K562 (cell line): ENCODE measurements at regions of chr9 and their contacts with region 1.

Region 1: DNA sequence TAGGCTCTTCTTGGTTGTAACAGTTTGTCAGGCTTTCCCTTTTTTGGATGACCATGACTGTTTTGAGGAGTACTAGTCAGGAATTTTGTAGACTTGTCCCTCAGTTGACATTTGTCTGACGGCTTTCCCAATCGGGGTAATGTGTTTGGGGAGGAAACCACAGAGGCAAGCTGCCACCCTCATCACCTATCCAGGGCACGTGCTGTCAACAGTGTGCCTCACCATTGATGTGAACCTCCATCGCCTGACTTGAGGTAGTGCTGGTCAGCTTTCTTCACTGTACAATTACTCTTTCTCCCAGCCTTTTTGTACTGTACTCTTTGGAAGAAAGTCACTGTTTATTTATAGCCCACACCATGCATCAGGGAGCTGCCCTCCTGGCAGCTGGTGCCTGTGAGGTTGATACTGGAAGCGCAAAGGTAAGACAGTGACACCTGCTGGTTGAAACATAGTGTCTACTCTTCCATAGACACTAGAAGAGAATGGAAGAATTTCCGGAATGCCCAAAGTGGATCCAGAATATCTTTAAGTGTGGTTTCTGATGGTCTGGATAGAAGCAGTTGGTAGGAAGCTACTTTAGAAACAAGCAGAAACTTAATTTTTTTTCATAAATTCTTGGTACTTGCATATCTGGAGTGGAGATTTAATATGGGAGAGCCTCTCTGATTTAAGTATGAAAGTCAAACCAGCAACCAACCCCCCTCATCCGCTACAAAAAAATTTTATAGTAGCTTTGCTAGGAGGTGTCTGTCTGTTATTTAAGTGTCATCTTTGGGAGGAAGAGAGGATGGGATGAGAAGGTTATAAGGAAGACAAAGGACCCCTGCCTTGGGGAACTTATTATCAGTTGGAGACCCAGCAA is 69.3 kb downstream of the SNX30 start:
- DNase-seq: peak; percentile 32 to 69 (median 52)
- ATAC-seq: peak; percentile 98
- H3K4me3 ChIP-seq: no peak overlapping the region
- H3K27ac ChIP-seq: no peak overlapping the region
- H3K4me1 ChIP-seq: no peaks in the 10 kb centered on the region
- H3K27me3 ChIP-seq: no peaks in the 10 kb centered on the region; a peak in 1 of 5 replicates
- CTCF ChIP-seq: peak; percentile 68 to 80 (median 75)
- EP300 ChIP-seq: no peak
- POLR2A ChIP-seq: no peak
- RAD21 ChIP-seq: peak; percentile 62 to 84

Region 2: DNA sequence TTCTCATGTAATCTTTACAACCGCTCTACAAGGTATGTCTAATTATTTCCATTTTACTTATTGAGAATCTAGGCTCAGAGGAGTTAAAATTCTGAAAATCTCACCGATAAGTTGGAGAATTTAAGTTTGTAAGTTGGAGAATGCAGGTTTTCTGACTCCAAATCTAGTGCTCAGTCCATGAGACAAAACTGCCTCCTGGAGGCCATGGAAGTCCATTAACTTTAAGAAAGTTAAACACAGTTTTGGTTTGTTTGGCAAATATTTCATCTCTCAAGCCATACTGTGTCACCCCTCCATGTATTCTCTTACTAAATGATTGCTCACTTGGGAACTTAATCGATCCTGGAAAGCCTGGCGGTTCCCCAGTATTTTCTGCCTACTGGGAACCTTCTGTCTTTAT is 154.5 kb before region 1 on chr9:
- CTCF ChIA-PET with region 1: no interaction called
- POLR2A ChIA-PET with region 1: no interaction called
- in situ Hi-C with region 1: no loop called
- intact Hi-C with region 1: loop called (anchors 5 kb)
- DNase-seq: peak in 2 of 4 experiments; percentile 15 to 42
- ATAC-seq: peak; percentile 66
- H3K4me3 ChIP-seq: no peak overlapping the region
- H3K27ac ChIP-seq: no peak overlapping the region
- H3K4me1 ChIP-seq: no peaks in the 10 kb centered on the region
- H3K27me3 ChIP-seq: 0 out of 5 replicates have a peak, but pooled peaks cover 0 to 2% of the 10 kb centered on the region in 2 experiments
- CTCF ChIP-seq: peak; percentile 22 to 65 (median 50); a peak in 4 of 6 replicates
- EP300 ChIP-seq: no peak
- POLR2A ChIP-seq: no peak
- RAD21 ChIP-seq: peak; percentile 42 to 82

Region 3: DNA sequence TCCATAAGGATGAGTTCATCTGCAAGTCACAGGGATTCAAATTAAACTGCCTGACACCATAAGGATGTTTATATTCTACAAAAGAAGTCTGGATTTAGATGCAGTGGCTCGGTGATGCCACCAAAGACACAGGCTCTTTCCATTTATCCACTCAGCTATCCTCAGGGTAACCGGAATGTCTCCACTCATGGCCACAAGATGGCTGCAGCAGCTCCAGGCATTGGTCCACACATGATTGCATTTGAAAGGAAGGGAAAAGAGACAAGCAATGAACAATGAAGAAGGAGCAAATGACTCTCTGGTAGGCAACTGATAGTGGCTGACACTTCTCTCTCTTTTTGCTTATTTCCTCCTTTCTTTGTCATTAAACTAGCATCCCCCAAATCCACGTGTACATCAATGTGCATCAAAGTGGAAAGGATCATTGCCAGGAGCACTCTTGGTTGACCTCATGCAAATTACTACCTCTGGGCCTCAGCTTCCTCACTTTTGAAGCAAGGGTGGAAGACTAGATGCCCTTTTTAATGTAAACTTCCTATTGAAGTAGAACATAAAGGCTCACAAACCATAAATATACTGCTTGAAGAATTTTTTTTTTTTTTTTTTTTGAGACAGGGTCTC is 76.5 kb before region 1 on chr9:
- CTCF ChIA-PET with region 1: no interaction called
- POLR2A ChIA-PET with region 1: no interaction called
- in situ Hi-C with region 1: no loop called
- intact Hi-C with region 1: loop called (anchors 2 kb)
- DNase-seq: peak in 1 of 4 experiments; percentile 25
- ATAC-seq: peak; percentile 74
- H3K4me3 ChIP-seq: no peak overlapping the region
- H3K27ac ChIP-seq: no peak overlapping the region
- H3K4me1 ChIP-seq: no peaks in the 10 kb centered on the region
- H3K27me3 ChIP-seq: no peaks in the 10 kb centered on the region
- CTCF ChIP-seq: peak in 2 of 3 experiments; percentile 32 to 41; a peak in 3 of 6 replicates
- EP300 ChIP-seq: no peak
- POLR2A ChIP-seq: no peak
- RAD21 ChIP-seq: peak in 1 of 2 experiments; percentile 43; a peak in 2 of 4 replicates